Posterior cingulate gyrus (tissue), 11 donors: ENCODE measurements at regions of chr19 and their contacts with region 1.

Region 1: GRCh38 chr19:46661020-46661731 is at the start of gene DACT3:
- DNase-seq: peak; percentile 100

Region 2: GRCh38 chr19:46529622-46530462 is 131.3 kb before region 1 on chr19:
- intact Hi-C with region 1: loop called (anchors 10 kb)
- DNase-seq: peak; percentile 49 to 97 (median 78)

Region 3: DNA sequence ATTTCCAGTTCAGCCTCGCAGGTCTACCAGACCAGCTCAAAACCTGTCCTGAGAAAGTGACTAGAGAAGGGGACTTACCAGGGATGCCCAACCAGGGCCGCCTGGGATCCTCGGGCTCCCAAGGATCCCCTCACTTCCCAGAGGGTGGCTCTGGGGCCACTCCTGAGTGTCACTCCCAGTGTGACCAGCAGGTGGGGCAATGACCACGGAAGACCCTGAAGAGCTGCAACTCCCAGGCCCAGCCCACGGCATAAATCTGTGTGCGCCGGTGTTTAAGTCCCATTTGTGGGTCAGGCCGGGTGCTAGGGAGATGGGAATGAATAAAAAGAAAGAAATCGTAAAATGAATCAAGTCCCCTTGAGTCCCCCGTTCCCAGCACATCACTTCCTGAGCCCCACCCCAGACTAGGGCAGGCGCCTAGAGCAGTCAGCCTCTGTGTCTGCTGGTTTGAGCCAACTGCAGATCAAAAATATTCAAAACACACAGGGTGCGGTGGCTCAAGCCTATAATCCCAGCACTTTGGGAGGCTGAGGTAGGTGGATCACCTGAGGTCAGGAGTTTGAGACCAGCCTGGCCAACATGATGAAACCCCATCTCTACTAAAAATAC is 47.0 kb before region 1 on chr19:
- intact Hi-C with region 1: loop called (anchors 1 kb)
- DNase-seq: peak; percentile 80 to 98 (median 90)

Region 4: GRCh38 chr19:46624958-46625661 is 36.1 kb before region 1 on chr19 and contains the start of gene PTGIR:
- intact Hi-C with region 1: loop called (anchors 5 kb)
- DNase-seq: peak in 1 of 10 donors; percentile 51

Region 5: GRCh38 chr19:46648060-46648960 is 12.9 kb before region 1 on chr19:
- intact Hi-C with region 1: no loop called
- DNase-seq: peak in 1 of 10 donors; percentile 40